ENCODE measurements at regions of chr10 and their contacts with region 1.

Region 1: GRCh38 chr10:30534465-30535144 is 94.9 kb downstream of the LYZL2 start:
- DNase-seq: peak; percentile 85
- H3K4me3 ChIP-seq: no peak overlapping the region
- H3K27ac ChIP-seq: no peak overlapping the region
- H3K4me1 ChIP-seq: no peaks in the 10 kb centered on the region
- H3K27me3 ChIP-seq: no peaks in the 10 kb centered on the region
- CTCF ChIP-seq: peak; percentile 88

Region 2: DNA sequence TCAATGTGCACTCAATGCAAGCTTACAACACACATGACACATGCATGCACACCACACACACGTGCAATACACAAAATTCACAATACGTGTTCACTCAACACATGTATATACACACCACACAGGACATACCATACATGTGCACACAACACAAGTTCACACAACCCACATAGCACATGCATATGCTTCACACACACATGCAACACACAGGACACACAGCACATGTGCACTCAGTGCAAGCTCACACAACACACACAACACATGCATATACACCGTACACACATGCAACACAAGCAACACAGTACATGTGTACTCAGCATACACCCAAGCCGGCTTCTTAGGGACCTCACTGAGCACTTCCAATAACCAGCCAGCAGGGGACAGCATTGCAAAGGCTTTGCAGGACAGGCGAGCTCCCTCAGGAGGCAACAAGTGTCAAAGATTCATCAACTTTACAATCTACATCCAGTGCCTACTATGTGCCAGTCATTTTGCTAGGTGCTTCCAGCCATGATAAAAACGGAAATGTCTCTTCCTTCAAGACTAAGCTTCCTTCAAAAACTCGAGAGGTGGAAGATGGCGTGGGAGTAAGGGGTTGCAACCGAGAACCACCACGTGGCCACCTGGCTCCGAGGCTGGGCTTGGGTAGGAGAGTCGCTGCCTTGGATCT is 536.3 kb before region 1 on chr10:
- CTCF ChIA-PET with region 1: interaction called, 7 read pairs
- POLR2A ChIA-PET with region 1: no interaction called
- intact Hi-C with region 1: loop called (anchors 2 kb)
- DNase-seq: peak; percentile 90
- H3K4me3 ChIP-seq: no peak overlapping the region
- H3K27ac ChIP-seq: no peak overlapping the region
- H3K4me1 ChIP-seq: peaks cover 23% of the 10 kb centered on the region
- H3K27me3 ChIP-seq: no peaks in the 10 kb centered on the region
- CTCF ChIP-seq: peak; percentile 99

Region 3: DNA sequence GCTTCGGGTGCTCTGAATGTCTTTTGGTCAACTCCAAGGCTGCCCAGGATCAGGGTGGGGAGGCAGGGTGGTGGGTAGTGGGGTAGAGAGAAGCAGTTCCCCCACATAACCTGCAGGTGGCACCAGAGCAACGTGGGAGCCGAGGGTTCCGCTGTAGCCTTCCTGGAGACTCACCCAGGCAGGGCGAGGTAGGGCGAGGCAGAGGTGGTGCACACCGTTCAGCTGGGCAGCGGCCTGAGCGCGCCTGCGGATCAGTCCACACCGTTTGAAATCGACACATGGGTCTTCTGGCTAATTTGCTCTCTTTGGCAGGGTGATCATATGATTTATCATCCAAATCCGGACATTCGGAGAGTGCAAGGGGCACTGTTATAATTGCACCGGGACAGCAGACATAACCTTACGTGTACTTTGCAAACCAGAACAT is 142.0 kb before region 1 on chr10:
- CTCF ChIA-PET with region 1: no interaction called
- POLR2A ChIA-PET with region 1: no interaction called
- intact Hi-C with region 1: loop called (anchors 2 kb)
- DNase-seq: peak; percentile 77
- H3K4me3 ChIP-seq: peak overlapping the region; percentile 23
- H3K27ac ChIP-seq: no peak overlapping the region
- H3K4me1 ChIP-seq: no peaks in the 10 kb centered on the region
- H3K27me3 ChIP-seq: no peaks in the 10 kb centered on the region
- CTCF ChIP-seq: peak; percentile 92

Region 4: DNA sequence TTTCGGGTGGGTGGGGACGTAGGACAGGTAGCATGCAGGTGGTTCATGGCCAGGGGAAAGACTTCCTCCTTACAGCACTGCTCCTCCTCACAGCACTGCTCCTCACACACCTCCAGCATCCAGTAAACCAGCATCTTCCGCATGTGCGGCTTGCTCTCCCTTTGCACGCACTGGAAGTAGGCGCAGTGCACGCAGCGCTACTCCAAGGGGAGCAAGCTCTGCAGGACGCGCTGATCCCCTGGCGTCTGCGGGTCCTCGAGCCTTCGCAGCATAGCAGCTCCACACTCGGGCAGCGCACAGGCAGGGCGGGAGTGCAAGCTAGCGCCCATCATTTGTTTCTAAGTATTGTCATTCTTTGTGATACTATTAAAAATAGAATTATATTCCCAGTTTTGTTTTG is 131.1 kb before region 1 on chr10:
- CTCF ChIA-PET with region 1: no interaction called
- POLR2A ChIA-PET with region 1: no interaction called
- intact Hi-C with region 1: no loop called
- DNase-seq: no peak
- H3K4me3 ChIP-seq: no peak overlapping the region
- H3K27ac ChIP-seq: no peak overlapping the region
- H3K4me1 ChIP-seq: no peaks in the 10 kb centered on the region
- H3K27me3 ChIP-seq: no peaks in the 10 kb centered on the region
- CTCF ChIP-seq: no peak

Region 5: GRCh38 chr10:30413996-30414576 is 120.5 kb before region 1 on chr10:
- CTCF ChIA-PET with region 1: interaction called, 6 read pairs
- POLR2A ChIA-PET with region 1: no interaction called
- intact Hi-C with region 1: loop called (anchors 1 kb)
- DNase-seq: peak; percentile 80
- H3K4me3 ChIP-seq: no peak overlapping the region
- H3K27ac ChIP-seq: no peak overlapping the region
- H3K4me1 ChIP-seq: no peaks in the 10 kb centered on the region
- H3K27me3 ChIP-seq: no peaks in the 10 kb centered on the region
- CTCF ChIP-seq: peak; percentile 77

Measured in A673 (cell line).